ENCODE measurements at regions of chr10 and their contacts with region 1.

Region 1: DNA sequence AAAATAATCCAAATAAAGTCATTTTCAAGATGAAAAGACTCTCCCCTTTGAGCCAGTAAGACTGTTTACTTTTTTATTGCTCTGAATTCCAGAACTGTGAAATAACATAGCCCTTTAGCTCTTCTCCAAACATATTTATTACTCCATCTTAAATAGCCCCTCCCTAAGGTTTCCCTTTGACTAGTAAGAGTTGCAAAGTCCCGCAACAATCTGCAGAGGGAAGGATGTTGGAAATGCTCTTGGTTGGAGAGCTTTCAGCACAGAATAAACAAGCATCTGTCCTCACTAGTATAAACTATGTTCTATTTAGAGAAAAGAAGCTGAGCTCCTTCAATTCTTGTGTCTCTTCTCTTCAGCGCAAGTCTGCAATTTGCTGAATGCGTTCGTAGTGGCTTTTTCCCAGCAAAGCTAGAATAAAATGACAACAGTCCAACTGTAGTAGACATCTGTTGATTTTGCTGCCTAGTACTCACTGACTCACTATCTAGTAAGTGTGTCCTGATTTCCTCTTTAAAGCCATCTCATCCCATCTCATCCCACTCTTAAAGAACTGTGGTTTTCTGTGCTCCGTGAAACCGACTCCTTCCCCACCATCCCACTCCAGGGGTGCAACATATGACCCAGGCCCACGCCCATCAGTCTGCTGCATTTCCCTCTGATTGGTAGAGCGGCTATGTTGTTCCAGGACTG is 104.0 kb downstream of the FAM107B start:
- DNase-seq: peak; percentile 77
- H3K4me3 ChIP-seq: no peak overlapping the region
- H3K27ac ChIP-seq: no peak overlapping the region
- H3K27me3 ChIP-seq: no peaks in the 10 kb centered on the region
- CTCF ChIP-seq: no peak

Region 2: GRCh38 chr10:14648005-14648765 is 22.5 kb before region 1 on chr10:
- CTCF ChIA-PET with region 1: no interaction called
- POLR2A ChIA-PET with region 1: no interaction called
- DNase-seq: peak; percentile 15
- H3K4me3 ChIP-seq: no peak overlapping the region
- H3K27ac ChIP-seq: no peak overlapping the region
- H3K27me3 ChIP-seq: peaks cover 19% of the 10 kb centered on the region
- CTCF ChIP-seq: no peak

Region 3: GRCh38 chr10:14659626-14660196 is 11.0 kb before region 1 on chr10:
- CTCF ChIA-PET with region 1: no interaction called
- POLR2A ChIA-PET with region 1: interaction called, 12 read pairs
- DNase-seq: no peak
- H3K4me3 ChIP-seq: no peak overlapping the region
- H3K27ac ChIP-seq: no peak overlapping the region
- H3K27me3 ChIP-seq: peaks cover 6% of the 10 kb centered on the region
- CTCF ChIP-seq: no peak